Transverse colon (tissue), 4 donors: ENCODE measurements at regions of chr21 and their contacts with region 1.

Region 1: GRCh38 chr21:34073032-34073869 is at the starts of genes MRPS6 and SLC5A3:
- DNase-seq: peak; percentile 89
- H3K4me3 ChIP-seq: peak within 1 kb of the TSS; percentile 74 to 91 (median 85)
- H3K27ac ChIP-seq: peak within 1 kb of the TSS; percentile 88 to 97 (median 95)
- H3K4me1 ChIP-seq: peaks cover 7 to 45% (median 38%) of the 10 kb centered on the region in 4 donors
- H3K27me3 ChIP-seq: no peaks in the 10 kb centered on the region
- CTCF ChIP-seq: no peak
- EP300 ChIP-seq: no peak
- POLR2A ChIP-seq: peak; percentile 87
- total RNA-seq, gene MRPS6: 27.9 to 59.1 (median 35.6) TPM
- total RNA-seq, gene SLC5A3: 12.0 to 32.6 (median 23.9) TPM

Region 2: GRCh38 chr21:33751120-33751519 is 322.1 kb before region 1 on chr21:
- in situ Hi-C with region 1: no loop called
- intact Hi-C with region 1: no loop called
- DNase-seq: no peak
- H3K4me3 ChIP-seq: no peak overlapping the region
- H3K27ac ChIP-seq: no peak overlapping the region
- H3K4me1 ChIP-seq: no peaks in the 10 kb centered on the region
- H3K27me3 ChIP-seq: no peaks in the 10 kb centered on the region
- CTCF ChIP-seq: no peak
- EP300 ChIP-seq: no peak
- POLR2A ChIP-seq: no peak

Region 3: DNA sequence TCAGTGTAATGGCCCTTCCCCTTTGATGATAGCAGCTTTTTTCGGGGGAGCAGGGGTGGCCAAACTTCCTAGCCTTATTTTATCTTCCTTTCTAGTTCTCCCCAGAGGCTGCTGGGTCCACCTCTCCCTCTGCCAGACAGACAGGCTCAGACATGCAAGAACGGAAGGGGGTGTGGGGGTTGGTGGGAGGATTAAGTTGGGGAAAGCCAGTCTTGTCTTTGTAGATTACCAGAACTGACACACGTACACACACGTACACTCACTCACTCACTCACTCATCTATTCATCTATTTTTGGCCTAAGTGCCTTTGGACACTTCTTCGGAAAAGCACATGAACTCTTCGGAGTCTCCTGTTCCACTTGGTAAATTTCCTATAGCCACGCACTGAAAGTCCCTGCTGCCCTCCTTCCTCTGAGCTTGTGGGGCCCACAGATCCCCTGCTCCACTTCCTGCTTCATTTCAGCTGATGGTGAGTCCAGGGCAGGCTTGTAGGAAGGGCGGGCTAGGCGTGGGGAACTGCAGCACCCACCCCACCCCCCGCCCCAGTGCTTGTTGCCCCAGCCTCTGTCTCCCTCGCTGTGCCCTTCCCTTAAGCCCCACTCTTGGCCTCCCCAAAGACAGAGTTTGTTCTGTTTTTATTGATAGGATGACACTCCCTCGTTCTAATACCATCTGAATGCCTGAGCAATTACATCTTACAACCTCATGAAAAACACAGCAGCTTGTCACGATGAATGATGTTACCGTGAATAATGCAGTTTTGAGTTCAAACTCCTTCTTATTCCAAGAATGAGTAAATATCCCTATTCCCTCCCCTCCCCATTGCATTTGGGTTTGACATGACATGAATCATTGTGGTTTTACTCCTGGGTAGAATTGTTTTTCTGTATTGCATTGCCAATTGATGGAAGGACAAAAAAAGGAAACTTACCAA is 96.9 kb before region 1 on chr21:
- in situ Hi-C with region 1: no loop called
- intact Hi-C with region 1: no loop called
- DNase-seq: peak; percentile 20
- H3K4me3 ChIP-seq: no peak overlapping the region
- H3K27ac ChIP-seq: peak overlapping the region; percentile 35 to 70 (median 64)
- H3K4me1 ChIP-seq: peaks cover 10 to 32% (median 15%) of the 10 kb centered on the region in 4 donors
- H3K27me3 ChIP-seq: peaks cover 9% of the 10 kb centered on the region
- CTCF ChIP-seq: no peak
- EP300 ChIP-seq: no peak
- POLR2A ChIP-seq: no peak

Region 4: GRCh38 chr21:34129039-34129891 is 56.0 kb after region 1 on chr21:
- in situ Hi-C with region 1: no loop called
- intact Hi-C with region 1: loop called (anchors 5 kb)
- DNase-seq: peak; percentile 42
- H3K4me3 ChIP-seq: no peak overlapping the region
- H3K27ac ChIP-seq: peak overlapping the region; percentile 63 to 87 (median 78)
- H3K4me1 ChIP-seq: peaks cover 26 to 66% (median 36%) of the 10 kb centered on the region in 4 donors
- H3K27me3 ChIP-seq: no peaks in the 10 kb centered on the region
- CTCF ChIP-seq: peak in 3 of 5 experiments; percentile 22 to 28 (median 24)
- EP300 ChIP-seq: no peak
- POLR2A ChIP-seq: no peak

Region 5: DNA sequence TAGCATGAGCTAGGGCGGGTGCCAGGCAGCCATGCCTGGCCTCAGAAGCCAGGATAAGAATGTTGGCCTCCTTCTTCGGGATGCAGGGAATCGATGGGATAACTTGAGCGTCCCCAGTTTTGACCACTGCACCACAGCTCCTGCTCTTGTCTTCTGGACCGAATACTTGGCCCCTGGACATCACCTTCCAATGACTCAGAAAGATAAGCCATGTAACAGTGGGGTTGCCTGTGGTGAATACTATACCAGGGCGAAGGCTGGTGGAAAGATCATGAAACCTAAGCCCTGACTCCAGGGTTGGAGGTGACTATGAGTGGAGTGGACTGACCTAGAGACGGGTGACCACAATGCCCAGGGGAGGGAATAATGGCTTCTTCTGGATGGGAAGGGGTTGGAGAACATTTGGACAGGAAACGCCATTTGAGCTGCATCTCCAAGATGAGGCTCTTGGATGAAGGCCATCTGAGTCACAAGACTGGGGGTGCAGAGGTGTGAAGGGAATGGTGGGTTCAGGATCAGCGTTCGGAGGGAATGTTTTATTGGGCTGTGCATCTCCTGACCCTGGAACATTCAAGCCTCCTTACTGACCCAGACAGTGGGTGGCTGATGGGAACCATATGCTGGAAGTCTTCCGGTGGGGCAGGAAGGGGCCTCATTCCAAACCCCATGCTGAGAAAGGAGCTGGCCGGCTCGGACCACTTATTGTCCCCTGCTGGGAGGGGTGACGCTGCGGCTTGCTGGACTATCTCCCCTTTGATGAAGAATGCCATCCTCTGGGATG is 272.0 kb after region 1 on chr21:
- in situ Hi-C with region 1: no loop called
- intact Hi-C with region 1: loop called (anchors 5 kb)
- DNase-seq: no peak
- H3K4me3 ChIP-seq: no peak overlapping the region
- H3K27ac ChIP-seq: peak overlapping the region; percentile 39 to 69 (median 60)
- H3K4me1 ChIP-seq: peaks cover 0 to 12% (median 6%) of the 10 kb centered on the region in 4 donors
- H3K27me3 ChIP-seq: no peaks in the 10 kb centered on the region
- CTCF ChIP-seq: no peak
- EP300 ChIP-seq: no peak
- POLR2A ChIP-seq: no peak